Left cardiac atrium (tissue), 4 donors: ENCODE measurements at regions of chr12 and their contacts with region 1.

Region 1: GRCh38 chr12:1594261-1595025 is at the start of gene FBXL14:
- DNase-seq: peak; percentile 94
- ATAC-seq: peak; percentile 80 to 84
- total RNA-seq, gene FBXL14: 7.0 to 7.6 TPM

Region 2: GRCh38 chr12:1117970-1118563 is 476.4 kb before region 1 on chr12:
- intact Hi-C with region 1: loop called in 1 of 2 experiments (anchors 5 kb)
- DNase-seq: peak; percentile 71
- ATAC-seq: peak; percentile 54 to 57